Dorsolateral prefrontal cortex (tissue), 120 donors: ENCODE measurements at regions of chr17 and their contacts with region 1.

Region 1: DNA sequence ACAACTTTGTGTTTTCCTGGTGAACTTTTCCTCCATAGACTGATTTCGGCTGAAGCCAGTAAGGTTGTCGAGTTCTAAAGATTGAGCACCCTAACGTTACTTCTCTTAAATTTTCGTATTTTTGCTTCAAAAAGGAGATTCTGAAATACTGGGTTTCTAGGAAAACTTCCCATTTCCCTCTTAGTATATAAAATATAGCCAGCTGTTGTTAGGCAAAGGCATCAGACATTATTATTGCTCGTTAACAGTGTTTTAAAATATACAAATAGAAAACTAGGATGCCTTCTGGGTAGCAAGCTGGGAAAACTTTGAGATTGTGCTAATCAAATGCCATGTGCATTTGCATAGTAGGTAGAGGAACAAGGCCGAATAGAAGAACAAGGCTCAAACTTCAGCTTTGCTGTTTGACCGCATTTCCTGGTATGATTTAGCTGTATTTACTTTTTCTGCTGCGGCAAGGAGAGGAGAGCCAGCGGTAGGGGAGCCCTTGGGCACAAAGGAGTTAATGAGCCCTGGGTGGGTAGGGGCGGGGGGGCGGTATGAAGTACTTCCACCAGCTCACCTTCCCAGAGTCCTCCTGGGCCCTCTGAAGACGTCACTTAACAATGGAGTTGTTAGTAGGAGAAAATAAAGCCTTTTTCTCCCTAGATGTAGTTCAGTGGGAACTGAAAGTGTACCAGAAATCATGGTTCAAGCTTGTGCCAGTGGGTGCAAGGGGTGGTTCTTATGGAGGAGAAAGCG is 151.9 kb downstream of the MSI2 start:
- DNase-seq: peak in 1 of 10 donors; percentile 20
- H3K4me3 ChIP-seq: peak overlapping the region in 29 of 59 donors; percentile 4 to 50 (median 25)
- H3K27ac ChIP-seq: peak overlapping the region in 56 of 59 donors; percentile 17 to 89 (median 75)
- H3K27me3 ChIP-seq: no peaks in the 10 kb centered on the region
- CTCF ChIP-seq: no peak

Region 2: GRCh38 chr17:57121338-57122042 is 286.8 kb before region 1 on chr17:
- intact Hi-C with region 1: no loop called
- DNase-seq: peak in 6 of 10 donors; percentile 49 to 67 (median 62)
- H3K4me3 ChIP-seq: no peak overlapping the region
- H3K27ac ChIP-seq: no peak overlapping the region
- H3K27me3 ChIP-seq: no peaks in the 10 kb centered on the region
- CTCF ChIP-seq: peak in 54 of 56 donors; percentile 28 to 63 (median 44)

Region 3: DNA sequence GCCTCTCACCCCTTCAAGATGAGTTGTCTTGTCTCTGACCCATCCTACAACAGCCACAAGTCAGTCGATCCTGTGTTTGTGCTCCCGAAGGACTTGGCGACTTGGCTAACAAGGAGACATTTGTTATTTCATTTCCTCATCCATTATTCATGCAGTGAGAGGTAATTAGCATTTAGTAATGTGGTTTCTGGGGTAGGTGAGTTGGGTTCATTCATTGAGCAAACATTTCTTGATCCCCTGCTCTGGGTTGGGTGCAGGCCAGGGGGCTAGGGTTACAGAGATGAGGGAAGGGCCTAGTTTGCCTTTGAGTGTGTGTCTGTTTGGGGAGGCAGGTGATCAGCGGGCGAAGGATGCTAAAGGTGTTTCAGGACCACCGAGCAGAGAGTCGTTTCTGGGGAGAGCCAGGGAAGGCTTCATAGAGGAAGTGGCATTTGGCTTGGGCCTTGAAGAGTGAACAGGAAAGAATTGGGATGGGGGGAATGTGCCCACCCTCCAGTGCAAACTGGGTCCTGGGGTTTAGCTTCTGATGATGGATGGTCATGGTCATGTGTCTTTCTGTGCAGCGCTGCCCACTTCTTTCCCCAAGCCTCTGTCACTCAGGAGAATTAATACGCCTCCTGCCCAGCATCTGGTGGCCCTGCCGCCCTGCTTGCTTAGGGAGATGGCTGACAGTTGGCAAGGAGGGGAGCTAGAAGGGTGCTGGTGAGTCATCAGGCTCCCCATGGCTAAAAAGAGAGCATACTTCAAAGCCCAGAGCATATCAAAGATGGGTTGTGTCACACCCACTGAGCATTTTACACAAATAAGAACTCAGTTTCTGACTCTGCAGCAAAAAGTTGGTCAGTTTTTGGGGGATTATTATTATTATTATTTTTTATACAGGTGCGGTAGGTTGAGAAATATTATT is 113.4 kb before region 1 on chr17:
- intact Hi-C with region 1: loop called in 1 of 2 experiments (anchors 10 kb)
- DNase-seq: no peak
- H3K4me3 ChIP-seq: no peak overlapping the region
- H3K27ac ChIP-seq: peak overlapping the region in 29 of 59 donors; percentile 2 to 74 (median 42)
- H3K27me3 ChIP-seq: no peaks in the 10 kb centered on the region
- CTCF ChIP-seq: no peak

Region 4: GRCh38 chr17:57478484-57479250 is 70.4 kb after region 1 on chr17:
- intact Hi-C with region 1: loop called in 1 of 2 experiments (anchors 10 kb)
- DNase-seq: no peak
- H3K4me3 ChIP-seq: no peak overlapping the region
- H3K27ac ChIP-seq: peak overlapping the region in 40 of 59 donors; percentile 1 to 80 (median 58)
- H3K27me3 ChIP-seq: no peaks in the 10 kb centered on the region
- CTCF ChIP-seq: no peak

Region 5: GRCh38 chr17:57662644-57663308 is 254.5 kb after region 1 on chr17:
- intact Hi-C with region 1: loop called in 1 of 2 experiments (anchors 5 kb)
- DNase-seq: peak; percentile 98 to 100 (median 99)
- H3K4me3 ChIP-seq: peak overlapping the region in 58 of 59 donors; percentile 9 to 69 (median 52)
- H3K27ac ChIP-seq: peak overlapping the region; percentile 71 to 99 (median 94)
- H3K27me3 ChIP-seq: no peaks in the 10 kb centered on the region
- CTCF ChIP-seq: peak in 27 of 56 donors; percentile 6 to 47 (median 28)

Region 6: DNA sequence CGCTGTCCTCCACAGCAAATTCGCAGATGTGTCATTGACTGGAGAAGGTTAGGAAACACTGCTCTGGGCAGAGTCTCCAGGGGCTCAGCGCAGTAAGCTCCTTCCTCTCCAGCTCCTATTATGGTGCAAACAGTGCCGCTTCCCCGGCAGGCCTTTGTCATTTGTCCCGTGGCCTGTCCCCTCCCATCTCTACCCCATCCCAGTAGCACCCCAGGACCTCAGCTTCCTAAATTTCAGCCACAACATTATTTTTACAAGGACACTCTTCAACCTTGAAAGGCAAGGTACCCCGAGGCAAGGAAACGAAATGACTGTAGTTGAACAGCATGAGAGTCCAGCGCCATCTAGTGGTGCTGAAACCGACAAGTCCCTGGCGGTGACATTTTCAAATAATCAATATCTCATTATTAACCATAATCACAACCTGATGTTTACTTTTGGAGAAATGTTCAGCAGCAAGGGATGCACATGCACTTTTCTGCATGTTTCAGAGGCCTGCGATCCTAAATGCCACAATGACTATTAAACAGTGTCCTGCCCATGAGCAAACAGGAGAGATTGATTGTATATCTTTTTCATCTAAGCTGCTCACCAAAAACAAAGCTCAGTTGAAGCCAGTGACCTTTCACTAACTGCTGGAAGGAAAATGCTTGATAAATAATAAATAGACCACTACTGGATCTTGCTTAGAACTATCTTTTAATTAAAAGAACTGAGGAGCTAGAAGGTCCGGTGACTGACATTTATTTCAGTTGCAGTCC is 425.1 kb after region 1 on chr17:
- intact Hi-C with region 1: no loop called
- DNase-seq: peak in 9 of 10 donors; percentile 36 to 74 (median 62)
- H3K4me3 ChIP-seq: peak overlapping the region in 58 of 59 donors; percentile 14 to 67 (median 49)
- H3K27ac ChIP-seq: peak overlapping the region in 52 of 59 donors; percentile 1 to 87 (median 68)
- H3K27me3 ChIP-seq: no peaks in the 10 kb centered on the region
- CTCF ChIP-seq: peak; percentile 75 to 97 (median 90)